ENCODE measurements at regions of chr4 and their contacts with region 1.

Region 1: DNA sequence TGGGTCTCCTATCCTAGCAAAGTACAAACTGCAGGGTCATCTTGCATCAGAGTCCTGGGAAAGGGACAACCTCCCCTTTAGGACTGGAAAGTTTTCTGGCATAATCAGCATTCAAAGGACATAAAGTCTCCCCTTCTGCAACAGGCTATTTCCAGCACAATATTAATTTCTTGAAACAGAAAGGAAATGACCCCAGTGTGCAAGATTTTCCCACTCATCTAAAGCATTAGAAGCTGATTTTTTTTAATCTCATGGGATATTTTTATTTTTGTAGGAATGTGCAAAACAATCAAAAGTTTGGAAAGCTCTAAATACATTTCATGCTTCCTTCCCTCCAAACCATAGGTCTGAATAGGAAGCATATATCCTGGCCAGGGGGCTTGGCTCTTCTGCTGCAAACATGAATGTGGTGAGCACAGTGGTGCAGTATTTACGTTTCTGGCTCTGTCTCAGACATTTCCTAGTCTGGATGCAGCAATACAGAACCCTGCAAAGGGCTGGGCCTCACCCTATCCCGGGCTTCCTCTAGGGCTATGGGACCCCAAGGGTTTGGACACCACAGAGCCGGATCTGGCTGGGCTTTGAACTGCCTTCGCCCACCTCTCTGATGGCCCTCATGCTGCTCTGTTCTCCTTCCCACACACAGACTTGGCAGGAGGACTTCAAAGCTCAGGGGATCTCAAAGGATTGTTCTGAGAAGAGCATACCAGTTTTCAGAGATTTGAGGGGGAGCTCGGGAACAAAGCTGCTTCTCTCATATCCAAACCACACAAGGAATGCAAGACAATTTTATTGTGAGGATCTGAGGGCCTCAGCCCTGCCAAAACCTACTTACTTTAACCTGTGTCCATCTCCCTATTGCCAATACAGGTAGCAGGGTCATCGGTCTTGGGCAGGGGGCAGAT is 64.9 kb downstream of the POLR2B start:
- DNase-seq: no peak
- H3K4me3 ChIP-seq: peak overlapping the region; percentile 3 to 23
- H3K27ac ChIP-seq: peak overlapping the region; percentile 79 to 82
- H3K4me1 ChIP-seq: peaks cover 5 to 99% (median 63%) of the 10 kb centered on the region in 4 donors
- H3K27me3 ChIP-seq: no peaks in the 10 kb centered on the region
- CTCF ChIP-seq: no peak

Region 2: GRCh38 chr4:57109847-57110639 is 66.4 kb after region 1 on chr4 and contains the start of gene IGFBP7:
- intact Hi-C with region 1: loop called (anchors 5 kb)
- DNase-seq: peak; percentile 69 to 91
- H3K4me3 ChIP-seq: peak within 1 kb of the TSS; percentile 72 to 81
- H3K27ac ChIP-seq: peak within 1 kb of the TSS; percentile 87 to 99
- H3K4me1 ChIP-seq: peaks cover 0 to 48% (median 21%) of the 10 kb centered on the region in 4 donors
- H3K27me3 ChIP-seq: no peaks in the 10 kb centered on the region
- CTCF ChIP-seq: no peak

Region 3: DNA sequence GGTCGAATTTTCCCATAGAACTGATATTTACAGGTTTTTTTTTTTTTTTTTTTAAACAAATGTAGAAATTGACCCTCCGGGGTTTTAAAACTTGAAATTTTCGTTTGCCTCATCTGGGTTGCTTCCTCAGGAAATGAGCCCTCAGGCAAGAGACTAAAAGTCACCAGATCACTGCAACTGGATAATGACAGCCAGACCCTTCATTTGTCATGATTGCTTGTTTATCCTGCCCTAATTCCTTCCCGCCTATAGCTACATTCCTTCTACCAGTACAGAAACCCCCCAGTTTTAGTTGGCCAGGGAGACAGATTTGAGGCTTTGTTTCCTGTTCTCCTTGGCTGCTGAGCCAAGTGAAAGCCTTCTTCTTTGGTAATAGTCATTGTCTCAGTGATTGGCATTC is 110.6 kb after region 1 on chr4:
- intact Hi-C with region 1: no loop called
- DNase-seq: no peak
- H3K4me3 ChIP-seq: no peak overlapping the region
- H3K27ac ChIP-seq: no peak overlapping the region
- H3K4me1 ChIP-seq: no peaks in the 10 kb centered on the region
- H3K27me3 ChIP-seq: no peaks in the 10 kb centered on the region
- CTCF ChIP-seq: no peak

Region 4: GRCh38 chr4:57475424-57475823 is 431.8 kb after region 1 on chr4:
- intact Hi-C with region 1: no loop called
- DNase-seq: no peak
- H3K4me3 ChIP-seq: no peak overlapping the region
- H3K27ac ChIP-seq: no peak overlapping the region
- H3K4me1 ChIP-seq: no peaks in the 10 kb centered on the region
- H3K27me3 ChIP-seq: no peaks in the 10 kb centered on the region
- CTCF ChIP-seq: no peak